ENCODE measurements at regions of chr13 and their contacts with region 1.

Region 1: GRCh38 chr13:22121146-22121739 is 450.4 kb downstream of the FGF9 start:
- DNase-seq: no peak
- H3K4me3 ChIP-seq: no peak overlapping the region
- H3K4me3 Mint-ChIP-seq: no peak overlapping the region
- H3K27ac ChIP-seq: no peak overlapping the region
- H3K27ac Mint-ChIP-seq: no peak overlapping the region
- H3K4me1 ChIP-seq: peaks cover 0 to under 1% of the 10 kb centered on the region in 2 donors
- H3K4me1 Mint-ChIP-seq: peaks cover 2% of the 10 kb centered on the region
- H3K27me3 ChIP-seq: no peaks in the 10 kb centered on the region
- H3K27me3 Mint-ChIP-seq: peaks cover 4 to 5% (median 5%) of the 10 kb centered on the region in 3 donors
- CTCF ChIP-seq: no peak

Region 2: DNA sequence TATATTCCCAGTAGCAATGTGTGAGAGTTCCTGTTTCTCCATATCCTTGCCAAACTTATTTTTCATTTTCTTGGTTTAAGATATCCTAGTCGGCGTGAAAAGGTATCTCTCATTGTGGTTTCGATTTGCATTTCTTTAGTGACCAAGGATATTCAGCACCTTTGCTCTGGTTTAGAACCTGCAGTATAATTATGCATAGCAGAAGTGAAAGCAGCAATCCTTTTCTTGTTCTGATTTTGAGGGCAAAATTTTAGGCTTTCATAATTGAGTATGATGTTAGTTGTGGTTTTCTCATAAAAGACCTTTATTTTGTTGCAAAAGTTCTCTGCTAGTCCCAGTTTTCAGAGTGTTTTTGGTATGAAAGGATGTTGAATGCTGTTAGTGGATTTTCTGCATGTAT is 40.6 kb after region 1 on chr13:
- intact Hi-C with region 1: loop called (anchors 5 kb)
- DNase-seq: no peak
- H3K4me3 ChIP-seq: no peak overlapping the region
- H3K4me3 Mint-ChIP-seq: no peak overlapping the region
- H3K27ac ChIP-seq: no peak overlapping the region
- H3K27ac Mint-ChIP-seq: peak overlapping the region in 4 of 7 donors; percentile 5 to 63 (median 11)
- H3K4me1 ChIP-seq: peaks cover 11 to 16% of the 10 kb centered on the region in 2 donors
- H3K4me1 Mint-ChIP-seq: peaks cover 19% of the 10 kb centered on the region
- H3K27me3 ChIP-seq: no peaks in the 10 kb centered on the region
- H3K27me3 Mint-ChIP-seq: peaks cover 0 to 5% (median 2%) of the 10 kb centered on the region in 3 donors
- CTCF ChIP-seq: no peak